GM12878 (cell line): ENCODE measurements at regions of chr5 and their contacts with region 1.

Region 1: GRCh38 chr5:174418928-174419796 is 305.2 kb upstream of the MSX2 start:
- DNase-seq: peak; percentile 15
- ATAC-seq: peak; percentile 99
- H3K4me3 ChIP-seq: no peak overlapping the region
- H3K27ac ChIP-seq: no peak overlapping the region
- H3K4me1 ChIP-seq: no peaks in the 10 kb centered on the region
- H3K27me3 ChIP-seq: peaks cover 0 to 2% of the 10 kb centered on the region in 2 experiments; a peak in 1 of 4 replicates
- CTCF ChIP-seq: peak; percentile 90 to 94 (median 93)
- EP300 ChIP-seq: no peak
- POLR2A ChIP-seq: no peak
- RAD21 ChIP-seq: peak; percentile 86

Region 2: DNA sequence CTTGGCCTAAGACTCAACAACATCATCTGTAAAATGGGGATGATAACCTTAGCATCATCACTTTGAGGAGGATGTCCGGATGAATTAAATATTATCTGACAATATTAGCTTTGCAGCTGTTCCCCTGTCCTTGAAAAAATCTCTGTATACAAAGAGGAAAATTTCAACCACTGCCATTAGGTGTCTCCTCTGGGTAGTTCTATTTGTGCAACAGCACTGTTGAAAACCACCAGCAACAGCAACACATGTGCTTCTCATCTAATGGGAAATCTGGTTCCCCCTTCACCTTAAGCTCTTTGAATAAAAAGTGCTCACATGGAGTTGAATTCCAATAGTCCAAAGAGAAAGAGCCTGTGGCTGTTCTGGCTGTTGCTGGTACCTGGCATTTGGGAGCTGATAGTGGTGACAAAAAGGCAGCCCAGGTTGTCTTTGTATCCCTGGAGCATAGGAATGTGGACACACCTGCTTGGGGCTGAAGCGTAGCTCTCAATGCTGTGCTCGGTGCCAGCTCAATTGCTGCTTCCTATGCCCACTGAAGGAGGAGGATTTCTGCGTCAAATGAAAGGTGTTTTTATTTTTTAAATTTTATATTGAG is 16.8 kb before region 1 on chr5:
- CTCF ChIA-PET with region 1: interaction called, 14 read pairs
- POLR2A ChIA-PET with region 1: interaction called, 3 read pairs
- RAD21 ChIA-PET with region 1: no interaction called
- SMC1A ChIA-PET with region 1: no interaction called
- in situ Hi-C with region 1: no loop called
- intact Hi-C with region 1: no loop called
- DNase-seq: no peak
- ATAC-seq: no peak
- H3K4me3 ChIP-seq: no peak overlapping the region
- H3K27ac ChIP-seq: no peak overlapping the region
- H3K4me1 ChIP-seq: no peaks in the 10 kb centered on the region
- H3K27me3 ChIP-seq: no peaks in the 10 kb centered on the region; a peak in 2 of 4 replicates
- CTCF ChIP-seq: no peak
- EP300 ChIP-seq: no peak
- POLR2A ChIP-seq: no peak
- RAD21 ChIP-seq: no peak

Region 3: DNA sequence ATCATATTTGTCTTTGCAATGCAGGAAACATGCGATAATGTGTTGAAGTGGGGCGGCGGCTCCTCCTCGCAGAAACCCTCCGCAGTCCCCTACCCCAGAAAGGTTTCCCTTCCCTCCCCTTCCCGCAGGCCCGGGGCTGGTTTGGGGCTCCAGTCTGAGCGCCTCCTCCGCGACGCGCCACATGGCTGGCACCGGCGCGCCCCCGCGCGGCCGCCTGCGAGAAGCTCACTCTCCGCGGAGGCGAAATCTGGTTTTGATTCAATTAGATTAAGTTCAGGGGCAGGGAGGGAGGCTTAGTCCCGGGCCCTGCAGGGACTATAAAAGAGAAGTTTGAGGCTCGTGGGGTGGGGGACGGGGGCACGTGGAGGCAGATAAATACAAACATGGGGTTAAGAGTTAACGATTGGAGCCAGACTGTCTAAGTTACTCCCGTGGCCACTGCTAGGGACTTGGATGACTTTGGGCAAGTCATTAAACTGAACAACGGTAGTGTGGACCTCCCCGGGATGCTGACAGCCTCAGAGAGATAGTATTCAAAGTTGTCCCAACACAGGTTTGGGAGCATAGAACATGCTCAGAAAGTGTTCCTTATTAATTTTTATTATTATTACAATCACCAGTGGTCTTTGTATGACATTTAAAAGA is 374.6 kb after region 1 on chr5:
- CTCF ChIA-PET with region 1: interaction called, 56 read pairs
- POLR2A ChIA-PET with region 1: no interaction called
- RAD21 ChIA-PET with region 1: interaction called, 10 read pairs
- SMC1A ChIA-PET with region 1: interaction called, 5 read pairs
- in situ Hi-C with region 1: loop called (anchors 5 kb)
- intact Hi-C with region 1: loop called (anchors 1 kb)
- DNase-seq: no peak
- ATAC-seq: peak; percentile 91
- H3K4me3 ChIP-seq: no peak overlapping the region
- H3K27ac ChIP-seq: no peak overlapping the region
- H3K4me1 ChIP-seq: no peaks in the 10 kb centered on the region
- H3K27me3 ChIP-seq: no peaks in the 10 kb centered on the region; a peak in 1 of 4 replicates
- CTCF ChIP-seq: peak; percentile 81 to 85 (median 85)
- EP300 ChIP-seq: no peak
- POLR2A ChIP-seq: no peak
- RAD21 ChIP-seq: peak; percentile 75

Region 4: DNA sequence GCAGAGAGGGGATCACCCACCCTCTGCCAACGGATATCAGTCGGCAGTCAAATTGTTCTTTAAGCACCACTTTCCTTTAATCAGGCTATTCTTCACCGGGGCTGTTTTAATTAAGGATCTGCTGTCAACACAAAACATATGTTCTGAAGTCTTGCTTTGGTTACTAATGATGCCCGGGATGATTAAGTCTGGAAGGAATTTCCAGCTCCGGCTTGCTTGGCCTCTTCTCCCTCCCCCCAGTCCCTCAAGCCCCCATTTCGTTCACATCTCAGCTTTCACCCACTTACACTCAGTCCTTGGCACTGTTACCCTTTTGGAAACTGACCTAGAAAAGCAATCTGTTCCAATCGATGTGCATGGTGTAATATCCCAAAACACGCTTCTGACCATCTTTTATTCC is 380.0 kb after region 1 on chr5:
- CTCF ChIA-PET with region 1: interaction called, 56 read pairs
- POLR2A ChIA-PET with region 1: no interaction called
- RAD21 ChIA-PET with region 1: interaction called, 8 read pairs
- SMC1A ChIA-PET with region 1: interaction called, 5 read pairs
- in situ Hi-C with region 1: loop called (anchors 5 kb)
- intact Hi-C with region 1: no loop called
- DNase-seq: no peak
- ATAC-seq: no peak
- H3K4me3 ChIP-seq: no peak overlapping the region
- H3K27ac ChIP-seq: no peak overlapping the region
- H3K4me1 ChIP-seq: no peaks in the 10 kb centered on the region
- H3K27me3 ChIP-seq: no peaks in the 10 kb centered on the region; a peak in 1 of 4 replicates
- CTCF ChIP-seq: no peak
- EP300 ChIP-seq: no peak
- POLR2A ChIP-seq: no peak
- RAD21 ChIP-seq: no peak

Region 5: GRCh38 chr5:174935854-174936474 is 516.8 kb after region 1 on chr5:
- CTCF ChIA-PET with region 1: interaction called, 6 read pairs
- POLR2A ChIA-PET with region 1: no interaction called
- RAD21 ChIA-PET with region 1: interaction called, 5 read pairs
- SMC1A ChIA-PET with region 1: no interaction called
- in situ Hi-C with region 1: loop called (anchors 25 kb)
- intact Hi-C with region 1: loop called (anchors 1 kb)
- DNase-seq: no peak
- ATAC-seq: peak; percentile 80
- H3K4me3 ChIP-seq: no peak overlapping the region
- H3K27ac ChIP-seq: no peak overlapping the region
- H3K4me1 ChIP-seq: no peaks in the 10 kb centered on the region
- H3K27me3 ChIP-seq: no peaks in the 10 kb centered on the region; a peak in 1 of 4 replicates
- CTCF ChIP-seq: peak; percentile 84 to 97 (median 88)
- EP300 ChIP-seq: no peak
- POLR2A ChIP-seq: no peak
- RAD21 ChIP-seq: peak; percentile 70